ENCODE measurements at regions of chr14 and their contacts with region 1.

Region 1: GRCh38 chr14:59126710-59127432 is 61.6 kb upstream of the DAAM1 start:
- DNase-seq: peak in 1 of 2 donors; percentile 32
- ATAC-seq: peak in 7 of 8 donors; percentile 79 to 91 (median 89)
- H3K4me3 ChIP-seq: no peak overlapping the region
- H3K27ac ChIP-seq: no peak overlapping the region
- H3K4me1 ChIP-seq: peaks cover 0 to 9% (median 0%) of the 10 kb centered on the region in 9 donors
- H3K27me3 ChIP-seq: no peaks in the 10 kb centered on the region
- CTCF ChIP-seq: peak; percentile 60 to 88 (median 81)

Region 2: DNA sequence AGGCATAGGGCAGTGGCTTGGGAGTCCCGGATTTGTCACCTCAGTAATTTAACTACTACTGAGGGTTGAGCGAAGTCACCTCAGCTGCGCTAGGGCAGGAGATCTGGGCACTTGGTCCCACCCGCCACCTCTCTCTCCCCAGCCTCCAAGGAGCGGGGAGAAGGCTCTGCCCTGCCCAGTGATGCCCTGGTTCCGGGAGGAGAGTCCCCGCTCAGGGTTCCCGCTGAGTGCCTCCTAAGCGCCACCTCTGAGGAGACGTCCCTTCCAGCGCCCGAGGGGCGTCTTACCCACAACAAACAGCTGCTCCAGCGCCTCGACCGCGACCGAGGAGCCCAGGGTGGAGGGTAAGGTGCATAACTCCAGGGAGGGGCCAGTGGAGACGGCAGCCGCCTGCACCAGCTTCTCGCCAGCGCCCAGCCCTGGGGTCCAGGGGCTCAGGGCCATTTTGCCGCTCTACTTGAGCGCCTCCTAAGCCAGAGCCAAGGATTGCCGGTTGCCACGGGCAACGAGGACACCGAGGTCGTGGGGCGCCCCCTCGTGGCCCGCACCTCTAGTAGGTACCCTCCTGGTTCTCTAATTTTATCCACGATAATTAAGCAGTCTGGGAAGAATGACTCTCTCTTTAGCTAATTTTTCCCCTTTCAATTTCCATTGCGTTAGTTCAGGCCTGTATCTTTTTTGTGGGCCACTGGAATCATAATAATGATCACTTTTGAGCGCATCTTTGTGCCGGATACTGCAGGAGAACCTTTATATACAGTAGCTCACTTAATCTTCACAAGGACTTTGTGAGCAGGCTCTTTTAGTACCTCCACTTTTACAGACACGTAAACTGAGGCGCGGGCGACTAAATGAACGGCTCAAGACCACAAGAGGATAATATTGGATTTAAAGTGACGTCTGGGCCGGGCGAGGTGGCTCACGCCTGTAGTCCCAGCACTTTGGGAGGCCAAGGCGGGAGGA is 449.7 kb after region 1 on chr14 and contains the start of gene CCDC175:
- intact Hi-C with region 1: loop called in 1 of 10 experiments (anchors 10 kb)
- DNase-seq: peak; percentile 61 to 81
- ATAC-seq: peak; percentile 69 to 92 (median 80)
- H3K4me3 ChIP-seq: peak within 1 kb of the TSS in 9 of 10 donors; percentile 16 to 54 (median 43)
- H3K27ac ChIP-seq: no peak within 1 kb of the TSS
- H3K4me1 ChIP-seq: peaks cover 0 to 12% (median 5%) of the 10 kb centered on the region in 9 donors
- H3K27me3 ChIP-seq: peaks cover 0 to 45% (median 19%) of the 10 kb centered on the region in 7 donors
- CTCF ChIP-seq: peak; percentile 31 to 71 (median 63)
- total RNA-seq, gene CCDC175: not detected

Measured in heart right ventricle (tissue), 16 donors.